Caco-2 (cell line): ENCODE measurements at regions of chr5 and their contacts with region 1.

Region 1: GRCh38 chr5:39948867-39949468 is 524.2 kb upstream of the DAB2 start:
- DNase-seq: peak; percentile 49 to 59
- H3K4me3 ChIP-seq: no peak overlapping the region
- H3K4me3 Mint-ChIP-seq: no peak overlapping the region
- H3K27ac Mint-ChIP-seq: no peak overlapping the region
- H3K4me1 ChIP-seq: 0 out of 2 replicates have a peak, but pooled peaks cover 5% of the 10 kb centered on the region
- H3K4me1 Mint-ChIP-seq: no peaks in the 10 kb centered on the region
- H3K27me3 ChIP-seq: no peaks in the 10 kb centered on the region
- H3K27me3 Mint-ChIP-seq: peaks cover 6% of the 10 kb centered on the region
- CTCF ChIP-seq: peak; percentile 70

Region 2: GRCh38 chr5:40030661-40031060 is 81.7 kb after region 1 on chr5:
- CTCF ChIA-PET with region 1: no interaction called
- POLR2A ChIA-PET with region 1: no interaction called
- intact Hi-C with region 1: no loop called
- DNase-seq: no peak
- H3K4me3 ChIP-seq: no peak overlapping the region
- H3K4me3 Mint-ChIP-seq: no peak overlapping the region
- H3K27ac Mint-ChIP-seq: no peak overlapping the region
- H3K4me1 ChIP-seq: no peaks in the 10 kb centered on the region
- H3K4me1 Mint-ChIP-seq: no peaks in the 10 kb centered on the region
- H3K27me3 ChIP-seq: no peaks in the 10 kb centered on the region
- H3K27me3 Mint-ChIP-seq: peaks cover 16% of the 10 kb centered on the region
- CTCF ChIP-seq: no peak

Region 3: DNA sequence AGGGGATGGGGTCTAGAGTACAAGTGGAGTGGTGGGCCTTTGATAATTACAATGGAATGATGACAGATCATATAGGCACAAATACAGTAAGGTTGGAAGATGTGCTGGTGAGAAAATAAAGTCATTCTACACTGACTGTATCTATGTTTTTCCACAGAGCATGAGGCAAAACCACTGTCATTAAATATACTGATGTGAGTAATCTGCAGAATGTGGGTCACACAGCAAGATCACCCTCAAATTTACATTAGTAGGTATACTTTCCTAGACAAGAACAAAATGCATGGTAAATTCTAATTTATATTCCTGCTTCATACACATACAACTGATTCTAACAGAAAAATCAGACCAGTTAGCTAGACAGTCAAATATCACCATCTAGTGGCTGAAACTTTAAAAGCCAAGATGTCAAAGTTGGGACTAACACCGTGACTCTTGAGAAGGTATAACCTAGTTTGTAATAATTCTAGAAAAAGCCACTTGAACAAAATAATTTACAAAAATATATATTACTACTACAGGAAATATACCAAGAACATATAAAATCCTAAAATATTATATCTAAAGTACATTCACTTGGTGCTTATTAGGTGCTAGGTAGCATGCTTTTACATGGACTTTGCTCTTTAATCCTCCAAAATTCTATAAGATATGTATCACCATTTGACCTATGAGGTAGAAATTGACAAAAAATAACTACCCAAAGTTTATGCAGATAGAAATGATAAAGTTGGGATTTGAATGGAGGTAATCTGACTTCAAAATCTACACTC is 787.3 kb after region 1 on chr5:
- CTCF ChIA-PET with region 1: no interaction called
- POLR2A ChIA-PET with region 1: no interaction called
- intact Hi-C with region 1: loop called (anchors 1 kb)
- DNase-seq: peak in 1 of 2 experiments; percentile 42
- H3K4me3 ChIP-seq: no peak overlapping the region
- H3K4me3 Mint-ChIP-seq: no peak overlapping the region
- H3K27ac Mint-ChIP-seq: no peak overlapping the region
- H3K4me1 ChIP-seq: peaks cover 23% of the 10 kb centered on the region
- H3K4me1 Mint-ChIP-seq: peaks cover 23% of the 10 kb centered on the region
- H3K27me3 ChIP-seq: no peaks in the 10 kb centered on the region
- H3K27me3 Mint-ChIP-seq: no peaks in the 10 kb centered on the region
- CTCF ChIP-seq: peak; percentile 65 to 72